CD4-positive, alpha-beta T cell (primary cell): ENCODE measurements at regions of chr6 and their contacts with region 1.

Region 1: GRCh38 chr6:37396476-37397180 is 36.4 kb upstream of the CMTR1 start:
- DNase-seq: no peak
- ATAC-seq: no peak
- H3K4me3 ChIP-seq: no peak overlapping the region
- H3K4me3 Mint-ChIP-seq: no peak overlapping the region
- H3K27ac ChIP-seq: no peak overlapping the region
- H3K27ac Mint-ChIP-seq: no peak overlapping the region
- H3K4me1 ChIP-seq: no peaks in the 10 kb centered on the region
- H3K4me1 Mint-ChIP-seq: no peaks in the 10 kb centered on the region
- H3K27me3 ChIP-seq: no peaks in the 10 kb centered on the region
- H3K27me3 Mint-ChIP-seq: no peaks in the 10 kb centered on the region
- CTCF ChIP-seq: no peak

Region 2: GRCh38 chr6:37381579-37381978 is 15.0 kb before region 1 on chr6:
- CTCF ChIA-PET with region 1: no interaction called
- POLR2A ChIA-PET with region 1: no interaction called
- intact Hi-C with region 1: no loop called
- DNase-seq: peak in 7 of 14 experiments; percentile 1 to 74 (median 24)
- ATAC-seq: peak; percentile 41
- H3K4me3 ChIP-seq: no peak overlapping the region
- H3K4me3 Mint-ChIP-seq: no peak overlapping the region
- H3K27ac ChIP-seq: no peak overlapping the region
- H3K27ac Mint-ChIP-seq: no peak overlapping the region
- H3K4me1 ChIP-seq: no peaks in the 10 kb centered on the region
- H3K4me1 Mint-ChIP-seq: no peaks in the 10 kb centered on the region
- H3K27me3 ChIP-seq: no peaks in the 10 kb centered on the region
- H3K27me3 Mint-ChIP-seq: no peaks in the 10 kb centered on the region
- CTCF ChIP-seq: peak; percentile 57

Region 3: GRCh38 chr6:37663019-37663810 is 266.6 kb after region 1 on chr6:
- CTCF ChIA-PET with region 1: no interaction called
- POLR2A ChIA-PET with region 1: no interaction called
- intact Hi-C with region 1: loop called in 1 of 2 experiments (anchors 5 kb)
- DNase-seq: no peak
- ATAC-seq: no peak
- H3K4me3 ChIP-seq: no peak overlapping the region
- H3K4me3 Mint-ChIP-seq: no peak overlapping the region
- H3K27ac ChIP-seq: no peak overlapping the region
- H3K27ac Mint-ChIP-seq: no peak overlapping the region
- H3K4me1 ChIP-seq: no peaks in the 10 kb centered on the region
- H3K4me1 Mint-ChIP-seq: no peaks in the 10 kb centered on the region
- H3K27me3 ChIP-seq: no peaks in the 10 kb centered on the region
- H3K27me3 Mint-ChIP-seq: peaks cover 7% of the 10 kb centered on the region
- CTCF ChIP-seq: no peak